ENCODE measurements at regions of chr4 and their contacts with region 1.

Region 1: DNA sequence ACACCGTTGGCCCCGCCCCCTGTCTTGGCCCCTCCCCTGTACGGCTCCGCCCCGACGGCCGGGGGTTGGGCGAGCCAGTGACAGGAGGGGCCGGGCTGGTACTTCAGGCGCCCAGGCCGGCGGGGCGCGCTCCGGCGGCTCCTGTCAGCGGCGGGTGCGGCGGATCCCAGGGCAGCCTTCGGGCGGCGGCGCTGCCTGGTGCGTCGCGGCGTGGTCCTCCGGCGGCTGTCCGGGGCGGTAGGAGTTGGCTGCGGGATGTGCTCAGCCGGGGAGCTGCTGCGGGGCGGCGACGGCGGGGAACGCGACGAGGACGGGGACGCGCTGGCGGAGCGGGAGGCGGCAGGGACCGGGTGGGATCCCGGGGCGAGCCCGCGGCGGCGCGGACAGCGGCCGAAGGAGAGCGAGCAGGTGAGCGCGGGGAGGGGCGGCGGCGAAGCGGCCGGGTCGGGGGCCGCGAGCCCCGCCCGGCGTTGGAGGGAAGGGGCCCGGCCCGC is at the start of gene FAM241A:
- DNase-seq: peak; percentile 92
- H3K4me3 Mint-ChIP-seq: peak within 1 kb of the TSS; percentile 87
- H3K27ac Mint-ChIP-seq: peak within 1 kb of the TSS; percentile 84
- H3K4me1 Mint-ChIP-seq: peaks cover 42% of the 10 kb centered on the region
- H3K27me3 Mint-ChIP-seq: no peaks in the 10 kb centered on the region
- total RNA-seq, gene FAM241A: 3.1 to 3.5 TPM

Region 2: GRCh38 chr4:111454961-111455360 is 690.4 kb before region 1 on chr4:
- CTCF ChIA-PET with region 1: no interaction called
- POLR2A ChIA-PET with region 1: no interaction called
- intact Hi-C with region 1: no loop called
- DNase-seq: no peak
- H3K4me3 Mint-ChIP-seq: no peak overlapping the region
- H3K27ac Mint-ChIP-seq: no peak overlapping the region
- H3K4me1 Mint-ChIP-seq: no peaks in the 10 kb centered on the region
- H3K27me3 Mint-ChIP-seq: no peaks in the 10 kb centered on the region

Region 3: DNA sequence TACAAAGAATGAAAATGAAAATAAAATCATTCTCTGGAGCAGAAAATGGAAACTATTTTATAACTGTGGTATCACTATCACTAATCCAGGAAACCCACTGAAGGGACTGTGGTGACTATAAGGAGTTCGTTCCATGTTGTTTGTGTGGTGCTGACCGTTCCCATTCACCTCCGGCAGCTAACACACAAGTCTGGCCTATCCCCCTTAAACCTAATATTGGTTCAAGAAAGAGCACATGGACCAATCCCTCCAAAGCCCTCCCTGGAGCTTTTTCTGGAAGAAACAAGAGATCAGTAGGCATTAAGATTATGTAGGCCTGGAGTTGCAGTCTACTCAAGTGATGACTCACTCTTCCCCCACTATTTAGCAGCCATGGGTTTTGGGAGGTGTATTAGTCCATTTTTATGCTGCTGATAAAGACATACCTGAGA is 26.0 kb before region 1 on chr4:
- CTCF ChIA-PET with region 1: interaction called, 3 read pairs
- POLR2A ChIA-PET with region 1: no interaction called
- intact Hi-C with region 1: loop called (anchors 1 kb)
- DNase-seq: peak; percentile 35
- H3K4me3 Mint-ChIP-seq: no peak overlapping the region
- H3K27ac Mint-ChIP-seq: peak overlapping the region; percentile 81
- H3K4me1 Mint-ChIP-seq: peaks cover 12% of the 10 kb centered on the region
- H3K27me3 Mint-ChIP-seq: peaks cover 2% of the 10 kb centered on the region

Region 4: DNA sequence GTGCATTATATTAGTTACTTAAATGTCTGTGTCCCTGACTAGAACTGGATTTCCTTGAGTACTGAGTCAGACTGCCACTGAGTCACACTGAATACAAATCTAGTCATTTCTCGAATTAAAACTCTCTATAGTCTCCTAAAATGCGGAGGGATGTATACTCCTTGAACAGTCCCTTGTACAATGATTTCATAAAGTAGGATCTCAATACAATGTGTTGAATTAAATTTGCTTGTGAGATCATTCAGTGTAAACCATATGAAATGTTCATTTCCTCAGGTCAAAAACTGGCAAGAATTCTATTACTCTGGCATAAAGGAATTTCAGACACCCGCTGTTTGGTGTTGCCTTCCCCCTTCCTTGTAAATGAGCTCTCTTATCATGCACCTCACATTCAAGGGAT is 17.6 kb before region 1 on chr4:
- CTCF ChIA-PET with region 1: interaction called, 3 read pairs
- POLR2A ChIA-PET with region 1: no interaction called
- intact Hi-C with region 1: loop called (anchors 1 kb)
- DNase-seq: no peak
- H3K4me3 Mint-ChIP-seq: no peak overlapping the region
- H3K27ac Mint-ChIP-seq: no peak overlapping the region
- H3K4me1 Mint-ChIP-seq: peaks cover 12% of the 10 kb centered on the region
- H3K27me3 Mint-ChIP-seq: peaks cover 13% of the 10 kb centered on the region

Region 5: DNA sequence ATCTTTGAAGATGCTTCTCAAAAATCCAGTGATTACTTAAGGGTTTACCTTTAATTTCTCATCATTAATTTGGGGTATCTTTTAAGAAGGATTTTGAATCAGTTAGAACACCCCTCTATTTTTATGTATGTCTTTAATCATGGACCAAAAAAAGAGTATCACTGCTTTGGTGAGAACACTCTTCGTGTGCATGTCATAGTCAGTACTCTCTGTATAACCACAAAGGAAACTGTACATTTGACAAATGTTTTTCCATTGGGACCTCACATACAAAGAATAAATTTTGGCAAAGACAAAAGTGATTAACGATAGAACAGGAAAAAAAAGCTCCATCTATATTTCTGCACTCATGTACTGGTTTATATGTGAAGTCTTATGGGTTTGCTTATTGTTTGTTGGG is 31.2 kb after region 1 on chr4:
- CTCF ChIA-PET with region 1: interaction called, 6 read pairs
- POLR2A ChIA-PET with region 1: no interaction called
- intact Hi-C with region 1: loop called (anchors 2 kb)
- DNase-seq: no peak
- H3K4me3 Mint-ChIP-seq: no peak overlapping the region
- H3K27ac Mint-ChIP-seq: no peak overlapping the region
- H3K4me1 Mint-ChIP-seq: peaks cover 21% of the 10 kb centered on the region
- H3K27me3 Mint-ChIP-seq: no peaks in the 10 kb centered on the region

Region 6: DNA sequence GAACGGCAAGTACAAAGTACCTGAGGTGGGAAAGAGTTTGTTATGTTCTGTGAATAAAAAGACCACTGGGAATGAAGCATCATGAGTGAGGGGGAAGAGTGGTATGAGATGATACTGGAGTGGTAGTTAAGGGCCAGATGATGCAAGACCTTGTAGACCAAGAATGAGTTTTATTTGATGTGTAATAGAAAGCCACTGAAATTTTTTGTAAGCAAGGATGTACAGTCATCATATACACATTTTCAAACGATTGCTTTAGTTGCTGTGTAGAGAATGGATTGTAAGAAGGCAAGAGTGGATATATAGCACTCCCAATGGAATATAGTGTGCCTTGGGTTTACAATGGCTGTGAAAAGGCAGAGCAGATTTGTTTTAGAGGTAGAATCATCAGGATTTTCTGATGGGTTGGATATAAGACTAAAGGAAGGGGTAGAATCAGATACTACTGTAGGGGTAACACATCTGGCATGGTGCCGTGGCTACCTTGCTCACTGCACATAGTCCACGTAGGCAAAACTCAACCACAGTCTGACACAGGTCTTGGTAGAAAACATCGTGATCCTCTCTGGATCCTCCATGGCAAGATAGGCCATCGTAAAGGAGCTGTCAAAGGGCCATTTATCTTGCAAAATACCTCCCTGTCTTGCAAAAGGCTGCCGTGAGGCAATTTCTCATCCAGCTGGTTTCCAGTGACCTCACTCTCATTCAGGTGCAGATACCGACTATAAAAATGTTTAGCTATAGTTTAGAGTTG is 125.4 kb after region 1 on chr4:
- CTCF ChIA-PET with region 1: no interaction called
- POLR2A ChIA-PET with region 1: no interaction called
- intact Hi-C with region 1: loop called (anchors 5 kb)
- DNase-seq: no peak
- H3K4me3 Mint-ChIP-seq: no peak overlapping the region
- H3K27ac Mint-ChIP-seq: peak overlapping the region; percentile 77
- H3K4me1 Mint-ChIP-seq: peaks cover 60% of the 10 kb centered on the region
- H3K27me3 Mint-ChIP-seq: no peaks in the 10 kb centered on the region

Region 7: DNA sequence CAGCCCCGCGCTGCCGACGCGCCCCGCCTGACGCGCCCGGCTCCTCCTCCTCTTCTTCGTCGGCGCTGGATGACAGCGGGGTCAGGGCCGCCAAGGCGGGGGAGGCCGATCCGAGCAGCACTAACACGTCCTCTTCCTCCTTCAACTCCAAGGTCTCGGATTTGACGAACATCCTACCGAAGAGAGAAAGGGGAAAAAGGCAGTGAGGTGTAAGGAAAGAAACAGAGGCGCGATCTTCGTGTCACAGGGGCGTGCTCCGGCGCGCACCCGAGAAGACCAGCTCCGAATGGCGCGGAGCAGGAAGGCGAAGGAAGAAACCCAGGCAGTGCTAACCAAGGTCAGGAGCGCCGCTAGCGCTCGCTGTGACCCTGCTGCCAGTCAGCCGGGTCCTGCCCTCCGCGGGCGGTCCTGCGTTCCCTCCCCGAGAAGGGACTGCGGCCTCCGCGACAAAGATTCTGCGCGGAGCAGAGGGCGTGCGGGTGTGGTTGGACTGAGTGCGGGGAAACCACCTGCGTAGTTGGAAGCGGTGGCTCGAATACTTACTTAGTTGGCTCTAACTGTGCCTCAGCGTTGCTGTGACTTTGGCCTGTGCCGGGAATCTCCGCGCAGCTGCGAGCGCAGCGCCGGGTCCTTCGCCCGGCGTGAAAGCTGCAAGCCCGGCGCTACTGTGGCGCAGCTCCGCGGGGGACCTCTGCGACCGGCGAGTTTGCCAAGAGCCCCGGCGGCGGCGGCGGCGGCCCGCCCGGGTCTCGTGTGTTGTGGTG is 370.1 kb after region 1 on chr4:
- CTCF ChIA-PET with region 1: no interaction called
- POLR2A ChIA-PET with region 1: no interaction called
- intact Hi-C with region 1: loop called (anchors 2 kb)
- DNase-seq: peak; percentile 67
- H3K4me3 Mint-ChIP-seq: peak overlapping the region; percentile 94
- H3K27ac Mint-ChIP-seq: no peak overlapping the region
- H3K4me1 Mint-ChIP-seq: peaks cover 42% of the 10 kb centered on the region
- H3K27me3 Mint-ChIP-seq: peaks cover 85% of the 10 kb centered on the region